PC-9 (cell line): ENCODE measurements at regions of chr6 and their contacts with region 1.

Region 1: DNA sequence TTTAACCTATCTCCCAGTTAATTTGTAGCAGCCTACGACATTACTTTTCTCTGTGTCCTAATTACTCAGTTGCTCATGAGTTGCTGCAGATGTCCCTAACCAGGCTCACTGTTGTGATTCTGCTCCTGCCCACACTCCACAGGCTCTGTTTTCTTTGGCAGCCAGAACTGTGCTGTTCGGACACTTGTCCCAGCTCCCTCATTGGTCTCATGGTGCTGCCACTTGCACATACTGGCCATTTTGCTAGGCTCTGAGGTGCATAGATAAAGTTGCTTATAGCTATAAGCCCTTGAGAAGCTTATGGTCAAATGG is 55.0 kb downstream of the NOX3 start:
- DNase-seq: no peak
- H3K4me3 ChIP-seq: no peak overlapping the region
- H3K27ac ChIP-seq: no peak overlapping the region
- H3K4me1 ChIP-seq: no peaks in the 10 kb centered on the region
- H3K27me3 ChIP-seq: no peaks in the 10 kb centered on the region
- CTCF ChIP-seq: no peak

Region 2: DNA sequence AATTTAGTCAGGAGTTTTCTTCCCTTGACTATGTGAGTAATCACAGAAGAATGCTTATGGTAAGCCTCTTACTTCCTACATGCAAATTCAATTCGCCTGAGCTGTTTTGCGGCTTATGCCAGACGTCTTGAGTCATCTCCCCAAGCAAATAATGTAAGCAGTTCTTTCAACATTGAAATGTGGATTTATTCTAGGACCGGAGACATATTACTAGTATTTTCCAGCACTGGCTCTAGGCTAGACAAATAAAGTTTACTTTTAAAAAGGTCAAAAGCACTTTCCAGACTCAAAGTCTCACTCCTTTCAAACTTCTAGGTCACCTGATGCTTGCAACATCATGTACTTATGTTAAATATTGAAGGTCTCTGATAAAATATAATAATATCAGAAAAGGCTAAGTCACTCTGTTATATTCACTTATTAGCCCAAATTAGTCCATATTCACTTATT is 93.1 kb after region 1 on chr6:
- CTCF ChIA-PET with region 1: interaction called, 18 read pairs
- POLR2A ChIA-PET with region 1: no interaction called
- intact Hi-C with region 1: no loop called
- DNase-seq: peak; percentile 41 to 95
- H3K4me3 ChIP-seq: 0 out of 2 replicates have a peak overlapping the region, but pooled peaks have one; percentile 0
- H3K27ac ChIP-seq: peak overlapping the region; percentile 84
- H3K4me1 ChIP-seq: peaks cover 35% of the 10 kb centered on the region
- H3K27me3 ChIP-seq: no peaks in the 10 kb centered on the region
- CTCF ChIP-seq: no peak

Region 3: GRCh38 chr6:155510879-155511278 is 110.3 kb after region 1 on chr6:
- CTCF ChIA-PET with region 1: no interaction called
- POLR2A ChIA-PET with region 1: interaction called, 16 read pairs
- intact Hi-C with region 1: no loop called
- DNase-seq: no peak
- H3K4me3 ChIP-seq: no peak overlapping the region
- H3K27ac ChIP-seq: no peak overlapping the region
- H3K4me1 ChIP-seq: no peaks in the 10 kb centered on the region
- H3K27me3 ChIP-seq: no peaks in the 10 kb centered on the region
- CTCF ChIP-seq: no peak

Region 4: GRCh38 chr6:155523821-155524651 is 123.4 kb after region 1 on chr6:
- CTCF ChIA-PET with region 1: no interaction called
- POLR2A ChIA-PET with region 1: no interaction called
- intact Hi-C with region 1: no loop called
- DNase-seq: no peak
- H3K4me3 ChIP-seq: no peak overlapping the region
- H3K27ac ChIP-seq: no peak overlapping the region
- H3K4me1 ChIP-seq: peaks cover 12% of the 10 kb centered on the region
- H3K27me3 ChIP-seq: no peaks in the 10 kb centered on the region
- CTCF ChIP-seq: no peak

Region 5: GRCh38 chr6:155645325-155645724 is 244.7 kb after region 1 on chr6:
- CTCF ChIA-PET with region 1: no interaction called
- POLR2A ChIA-PET with region 1: no interaction called
- intact Hi-C with region 1: loop called (anchors 10 kb)
- DNase-seq: no peak
- H3K4me3 ChIP-seq: no peak overlapping the region
- H3K27ac ChIP-seq: no peak overlapping the region
- H3K4me1 ChIP-seq: peaks cover 11% of the 10 kb centered on the region; the same call in 1 of the 2 replicates
- H3K27me3 ChIP-seq: no peaks in the 10 kb centered on the region
- CTCF ChIP-seq: no peak